ENCODE measurements at regions of chr3 and their contacts with region 1.

Region 1: GRCh38 chr3:112424394-112424793 is 74.9 kb downstream of the BTLA start:
- DNase-seq: no peak
- ATAC-seq: no peak
- H3K4me3 ChIP-seq: no peak overlapping the region
- H3K27ac ChIP-seq: no peak overlapping the region
- H3K4me1 ChIP-seq: peaks cover 6% of the 10 kb centered on the region
- H3K27me3 ChIP-seq: no peaks in the 10 kb centered on the region
- CTCF ChIP-seq: no peak
- EP300 ChIP-seq: no peak
- POLR2A ChIP-seq: no peak
- RAD21 ChIP-seq: no peak

Region 2: DNA sequence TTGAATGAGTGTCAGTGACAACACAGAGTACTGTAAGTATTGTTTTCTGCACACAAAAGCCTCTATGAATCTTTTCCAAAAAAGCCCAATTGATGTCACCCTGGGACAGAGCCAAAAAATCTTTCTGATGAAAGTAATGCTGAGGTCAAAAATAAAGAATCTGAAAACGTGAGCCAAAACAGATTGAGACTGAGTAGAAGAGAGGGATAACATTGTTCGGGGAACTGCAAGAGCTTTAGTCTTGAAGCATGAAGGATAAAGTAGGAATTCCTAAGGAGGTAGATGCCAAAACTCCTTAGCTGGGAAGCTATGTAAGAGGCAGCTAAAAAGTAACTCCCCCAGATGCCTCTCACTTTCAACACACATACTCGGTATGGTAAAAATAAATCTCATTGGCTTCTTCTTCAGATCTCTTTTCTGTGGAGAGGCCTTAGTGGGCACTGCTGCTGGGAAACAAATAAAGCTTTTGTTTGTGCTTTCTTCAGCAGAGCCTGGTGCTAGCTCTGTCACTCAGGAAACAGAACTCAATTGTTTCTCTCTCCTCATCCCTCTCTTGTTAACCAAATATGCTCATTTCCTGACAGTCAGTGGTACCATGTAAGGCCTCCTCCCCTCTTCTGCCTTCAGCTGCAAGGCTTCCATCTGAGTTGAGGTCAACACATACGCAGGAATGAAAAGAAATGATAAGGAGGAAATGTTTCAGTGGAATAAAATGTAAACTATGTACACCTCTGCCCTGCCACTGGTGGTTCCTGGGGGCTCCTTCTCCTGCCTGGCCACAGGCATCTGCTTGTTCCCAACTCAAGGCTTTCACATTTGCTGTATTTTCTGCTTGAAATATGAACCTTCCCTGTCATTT is 33.4 kb before region 1 on chr3:
- CTCF ChIA-PET with region 1: no interaction called
- POLR2A ChIA-PET with region 1: no interaction called
- RAD21 ChIA-PET with region 1: no interaction called
- SMC1A ChIA-PET with region 1: no interaction called
- in situ Hi-C with region 1: no loop called
- intact Hi-C with region 1: no loop called
- DNase-seq: no peak
- ATAC-seq: peak; percentile 71
- H3K4me3 ChIP-seq: no peak overlapping the region
- H3K27ac ChIP-seq: 0 out of 2 replicates have a peak overlapping the region, but pooled peaks have one; percentile 1
- H3K4me1 ChIP-seq: peaks cover 6% of the 10 kb centered on the region; the same call in 1 of the 2 replicates
- H3K27me3 ChIP-seq: no peaks in the 10 kb centered on the region
- CTCF ChIP-seq: no peak
- EP300 ChIP-seq: no peak
- POLR2A ChIP-seq: no peak
- RAD21 ChIP-seq: no peak

Region 3: DNA sequence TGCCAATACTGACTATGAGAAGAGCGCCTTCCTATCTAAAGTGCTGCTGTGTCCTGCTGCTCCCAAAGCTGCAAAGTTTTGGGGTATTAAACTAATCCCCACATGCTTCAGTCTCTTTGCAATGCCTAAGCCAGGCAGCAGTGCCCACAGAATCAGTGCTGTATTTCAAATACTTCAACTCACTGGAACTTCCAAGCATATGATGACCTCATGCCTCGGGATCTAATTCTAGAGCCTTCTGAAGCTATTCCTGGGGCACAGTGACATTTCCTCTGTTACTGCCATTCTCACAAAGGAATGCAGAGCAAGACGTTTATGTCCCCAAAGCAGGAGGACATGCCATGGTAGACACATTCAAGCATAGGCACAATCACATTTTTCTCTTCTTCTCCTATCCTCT is 13.0 kb before region 1 on chr3:
- CTCF ChIA-PET with region 1: interaction called, 6 read pairs
- POLR2A ChIA-PET with region 1: no interaction called
- RAD21 ChIA-PET with region 1: interaction called, 6 read pairs
- SMC1A ChIA-PET with region 1: interaction called, 10 read pairs
- in situ Hi-C with region 1: no loop called
- intact Hi-C with region 1: no loop called
- DNase-seq: no peak
- ATAC-seq: no peak
- H3K4me3 ChIP-seq: no peak overlapping the region
- H3K27ac ChIP-seq: no peak overlapping the region
- H3K4me1 ChIP-seq: peaks cover 15% of the 10 kb centered on the region
- H3K27me3 ChIP-seq: no peaks in the 10 kb centered on the region
- CTCF ChIP-seq: no peak
- EP300 ChIP-seq: no peak
- POLR2A ChIP-seq: no peak
- RAD21 ChIP-seq: no peak

Measured in GM12878 (cell line).